ENCODE measurements at regions of chr7 and their contacts with region 1.

Region 1: DNA sequence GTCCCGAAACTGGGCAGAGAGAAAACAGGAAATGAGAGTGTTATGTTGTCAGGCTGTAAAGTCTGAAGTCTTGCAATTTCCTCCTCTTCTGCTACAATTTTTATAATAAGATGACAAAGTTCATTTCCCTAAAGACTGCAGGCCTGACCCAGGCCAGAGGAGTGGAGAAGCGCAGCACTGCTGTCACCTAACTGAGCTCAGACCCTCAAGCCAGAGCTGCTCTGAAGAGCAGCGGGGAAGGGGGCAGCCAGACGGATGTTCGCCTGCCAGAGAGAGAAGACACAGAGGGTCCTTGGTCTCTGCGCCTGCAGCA is 12.6 kb upstream of the AOAH start:
- DNase-seq: no peak
- H3K4me3 Mint-ChIP-seq: peak overlapping the region; percentile 67
- H3K27ac Mint-ChIP-seq: peak overlapping the region; percentile 80
- H3K4me1 Mint-ChIP-seq: peaks cover 41% of the 10 kb centered on the region
- H3K27me3 Mint-ChIP-seq: no peaks in the 10 kb centered on the region

Region 2: GRCh38 chr7:36777855-36778254 is 41.0 kb after region 1 on chr7:
- intact Hi-C with region 1: loop called (anchors 2 kb)
- DNase-seq: no peak
- H3K4me3 Mint-ChIP-seq: no peak overlapping the region
- H3K27ac Mint-ChIP-seq: no peak overlapping the region
- H3K4me1 Mint-ChIP-seq: peaks cover 77% of the 10 kb centered on the region
- H3K27me3 Mint-ChIP-seq: no peaks in the 10 kb centered on the region

Measured in activated T-helper 1 cell treated with anti-CD3 and anti-CD28 coated beads, Interleukin-12 subunit alpha, Interleukin-12 subunit beta, Interleukin-2, Interleukin-4 antibody, amounts not matched to agents 30 ng/mL and 10 ng/mL and 1 ng/mL, durations not matched to agents 14 hours and 24 hours and 36 hours (primary cell).